B cell (primary cell): ENCODE measurements at regions of chr9 and their contacts with region 1.

Region 1: DNA sequence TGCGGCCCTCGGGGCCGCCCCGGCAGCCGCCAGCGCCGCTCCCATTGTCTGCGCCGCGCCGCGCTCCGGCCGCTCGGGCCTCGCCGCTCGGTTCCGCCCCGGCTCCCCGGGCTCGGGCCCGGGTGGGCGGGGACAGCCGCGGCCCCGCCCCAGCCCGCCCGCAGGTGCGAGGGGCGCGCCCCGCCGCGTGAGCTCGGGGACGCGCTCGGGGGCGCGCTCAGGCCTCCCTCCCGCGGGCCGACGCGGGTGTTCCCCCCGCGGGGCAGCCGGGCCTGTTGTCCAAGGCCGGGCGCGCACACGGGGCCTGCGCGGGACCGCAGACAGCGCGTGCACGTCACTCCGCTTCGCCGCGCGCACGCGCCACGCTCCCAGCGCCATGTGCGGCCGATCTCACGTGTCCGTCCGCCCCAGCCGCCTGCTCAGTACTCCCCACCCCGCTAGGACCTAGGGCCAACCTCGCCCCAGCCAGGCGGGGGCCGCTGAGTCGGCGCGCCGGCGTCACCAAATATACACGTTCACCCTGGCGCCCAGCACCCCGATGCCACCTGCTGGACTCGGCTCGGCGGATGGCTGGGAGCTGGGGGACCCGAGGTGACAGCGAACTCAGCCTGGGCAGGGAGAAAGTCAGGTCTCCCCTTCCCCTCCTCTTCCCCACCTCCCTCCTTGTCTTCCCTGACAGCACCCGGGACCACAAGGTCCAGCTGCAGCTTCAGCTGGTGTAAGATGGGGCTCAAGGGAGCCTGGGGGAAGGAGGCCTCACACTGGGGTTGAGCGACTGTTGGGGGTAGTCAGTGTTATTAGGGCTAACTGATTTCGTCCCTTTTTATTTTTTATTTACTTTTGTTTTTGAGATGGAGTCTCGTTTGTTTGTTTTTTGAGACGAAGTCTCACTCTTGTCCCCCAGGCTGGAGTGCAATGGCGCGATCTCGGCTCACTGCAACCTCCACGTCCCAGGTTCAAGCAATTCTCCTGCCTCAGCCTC is 14.3 kb downstream of the GBGT1 start:
- DNase-seq: peak; percentile 97
- ATAC-seq: peak; percentile 74
- H3K4me3 ChIP-seq: peak overlapping the region in 4 of 5 experiments; percentile 44 to 88 (median 69)
- H3K4me3 Mint-ChIP-seq: peak overlapping the region; percentile 85
- H3K27ac ChIP-seq: peak overlapping the region; percentile 70 to 93
- H3K27ac Mint-ChIP-seq: peak overlapping the region; percentile 94
- H3K4me1 ChIP-seq: peaks cover 25 to 34% of the 10 kb centered on the region in 2 donors
- H3K4me1 Mint-ChIP-seq: peaks cover 37% of the 10 kb centered on the region
- H3K27me3 ChIP-seq: no peaks in the 10 kb centered on the region
- H3K27me3 Mint-ChIP-seq: no peaks in the 10 kb centered on the region
- CTCF ChIP-seq: peak; percentile 62

Region 2: DNA sequence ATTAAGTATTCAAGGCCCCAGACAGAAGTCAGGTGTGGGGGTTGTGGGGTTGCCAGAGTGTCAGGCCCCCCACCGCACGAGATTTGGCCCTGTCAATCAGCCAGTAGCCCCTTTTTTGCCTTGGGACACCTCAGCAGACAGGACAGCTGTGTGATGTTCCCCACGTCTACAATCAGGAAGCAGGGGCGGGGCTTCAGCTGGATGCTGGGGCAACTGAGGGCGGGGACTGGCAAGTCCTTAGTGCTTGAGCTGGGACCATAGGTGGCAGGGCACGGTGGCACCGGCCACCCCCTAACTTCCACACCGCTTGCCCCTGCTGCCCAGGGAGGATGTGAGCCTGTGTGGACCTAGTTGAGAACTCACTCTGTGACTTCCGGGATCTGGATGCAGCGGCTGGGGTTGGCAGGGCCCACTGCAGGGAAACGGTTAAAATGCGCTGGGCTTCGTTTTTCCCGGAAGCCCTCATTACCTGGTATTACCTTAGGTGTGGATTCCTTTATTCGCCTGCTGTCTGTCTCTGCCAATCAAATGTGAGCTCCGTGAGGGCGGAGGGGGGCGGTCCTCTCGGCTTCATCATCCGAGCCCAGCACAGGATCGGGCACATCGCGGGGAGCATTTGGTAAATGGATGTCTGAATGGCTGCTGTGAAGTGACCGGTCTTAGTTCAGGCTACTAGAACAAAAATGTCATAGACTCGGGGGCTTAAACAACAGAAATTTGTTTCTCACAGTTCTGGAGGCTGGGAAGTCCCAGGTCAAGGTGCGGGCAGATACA is 126.1 kb before region 1 on chr9:
- CTCF ChIA-PET with region 1: interaction called, 25 read pairs
- POLR2A ChIA-PET with region 1: no interaction called
- intact Hi-C with region 1: loop called (anchors 2 kb)
- DNase-seq: no peak
- ATAC-seq: no peak
- H3K4me3 ChIP-seq: no peak overlapping the region
- H3K4me3 Mint-ChIP-seq: no peak overlapping the region
- H3K27ac ChIP-seq: no peak overlapping the region
- H3K27ac Mint-ChIP-seq: no peak overlapping the region
- H3K4me1 ChIP-seq: peaks cover 3 to 5% of the 10 kb centered on the region in 2 donors
- H3K4me1 Mint-ChIP-seq: peaks cover 7% of the 10 kb centered on the region
- H3K27me3 ChIP-seq: no peaks in the 10 kb centered on the region
- H3K27me3 Mint-ChIP-seq: peaks cover 2% of the 10 kb centered on the region
- CTCF ChIP-seq: no peak

Region 3: GRCh38 chr9:133103183-133103986 is 46.0 kb before region 1 on chr9:
- CTCF ChIA-PET with region 1: interaction called, 599 read pairs
- POLR2A ChIA-PET with region 1: interaction called, 5 read pairs
- intact Hi-C with region 1: loop called (anchors 1 kb)
- DNase-seq: peak; percentile 74
- ATAC-seq: peak; percentile 89
- H3K4me3 ChIP-seq: no peak overlapping the region
- H3K4me3 Mint-ChIP-seq: no peak overlapping the region
- H3K27ac ChIP-seq: no peak overlapping the region
- H3K27ac Mint-ChIP-seq: peak overlapping the region; percentile 21
- H3K4me1 ChIP-seq: no peaks in the 10 kb centered on the region
- H3K4me1 Mint-ChIP-seq: no peaks in the 10 kb centered on the region
- H3K27me3 ChIP-seq: no peaks in the 10 kb centered on the region
- H3K27me3 Mint-ChIP-seq: no peaks in the 10 kb centered on the region
- CTCF ChIP-seq: peak; percentile 97

Region 4: GRCh38 chr9:133121198-133121939 is 28.0 kb before region 1 on chr9 and contains the start of gene RALGDS:
- CTCF ChIA-PET with region 1: interaction called, 599 read pairs
- POLR2A ChIA-PET with region 1: interaction called, 9 read pairs
- intact Hi-C with region 1: loop called (anchors 1 kb)
- DNase-seq: peak; percentile 95
- ATAC-seq: peak; percentile 84
- H3K4me3 ChIP-seq: peak within 1 kb of the TSS; percentile 4 to 75 (median 56)
- H3K4me3 Mint-ChIP-seq: peak within 1 kb of the TSS; percentile 89
- H3K27ac ChIP-seq: peak within 1 kb of the TSS; percentile 97 to 99
- H3K27ac Mint-ChIP-seq: peak within 1 kb of the TSS; percentile 99
- H3K4me1 ChIP-seq: peaks cover 27 to 45% of the 10 kb centered on the region in 2 donors
- H3K4me1 Mint-ChIP-seq: peaks cover 62% of the 10 kb centered on the region
- H3K27me3 ChIP-seq: no peaks in the 10 kb centered on the region
- H3K27me3 Mint-ChIP-seq: no peaks in the 10 kb centered on the region
- CTCF ChIP-seq: no peak
- total RNA-seq, gene RALGDS: 55.7 and 62.4 TPM in 2 replicates

Region 5: DNA sequence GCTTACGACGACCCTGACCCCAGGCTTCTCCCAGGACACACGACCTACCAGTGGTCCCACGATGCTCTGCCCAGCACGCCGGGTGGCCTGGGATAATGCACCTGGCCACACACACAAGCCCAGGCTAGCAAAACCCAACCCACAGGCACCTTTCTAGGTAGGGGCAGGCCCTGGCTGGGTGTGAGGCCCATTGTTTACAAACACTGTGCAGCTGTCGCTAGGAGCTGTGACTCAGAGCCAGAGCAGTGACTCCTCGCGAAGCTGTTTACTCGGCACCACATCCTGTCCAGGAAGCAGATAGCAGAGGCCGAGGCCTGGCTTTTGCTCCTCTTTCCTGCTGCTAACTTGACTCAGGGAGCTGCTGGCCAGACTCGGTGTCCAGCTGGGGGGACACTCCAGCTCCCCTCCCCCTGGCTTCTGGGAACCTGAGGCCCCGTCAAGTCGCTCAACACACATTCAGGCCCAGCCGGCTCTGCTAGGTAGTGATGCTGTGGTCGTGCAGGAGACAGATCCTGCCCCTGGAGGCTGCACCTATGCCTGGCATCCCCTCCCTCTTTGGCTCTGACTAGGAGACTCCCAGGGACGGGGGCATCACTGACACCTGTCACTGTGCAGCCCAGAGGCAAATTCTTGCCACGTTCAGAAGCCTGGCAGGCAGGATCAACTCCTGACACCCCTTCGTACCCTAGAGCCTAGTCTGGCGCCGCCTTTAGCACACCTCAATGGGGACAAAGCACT is 15.6 kb before region 1 on chr9:
- CTCF ChIA-PET with region 1: interaction called, 87 read pairs
- POLR2A ChIA-PET with region 1: interaction called, 22 read pairs
- intact Hi-C with region 1: loop called (anchors 1 kb)
- DNase-seq: peak; percentile 87
- ATAC-seq: peak; percentile 82
- H3K4me3 ChIP-seq: no peak overlapping the region
- H3K4me3 Mint-ChIP-seq: peak overlapping the region; percentile 80
- H3K27ac ChIP-seq: peak overlapping the region; percentile 92 to 95
- H3K27ac Mint-ChIP-seq: peak overlapping the region; percentile 100
- H3K4me1 ChIP-seq: peaks cover 28 to 55% of the 10 kb centered on the region in 2 donors
- H3K4me1 Mint-ChIP-seq: peaks cover 55% of the 10 kb centered on the region
- H3K27me3 ChIP-seq: no peaks in the 10 kb centered on the region
- H3K27me3 Mint-ChIP-seq: no peaks in the 10 kb centered on the region
- CTCF ChIP-seq: no peak

Region 6: DNA sequence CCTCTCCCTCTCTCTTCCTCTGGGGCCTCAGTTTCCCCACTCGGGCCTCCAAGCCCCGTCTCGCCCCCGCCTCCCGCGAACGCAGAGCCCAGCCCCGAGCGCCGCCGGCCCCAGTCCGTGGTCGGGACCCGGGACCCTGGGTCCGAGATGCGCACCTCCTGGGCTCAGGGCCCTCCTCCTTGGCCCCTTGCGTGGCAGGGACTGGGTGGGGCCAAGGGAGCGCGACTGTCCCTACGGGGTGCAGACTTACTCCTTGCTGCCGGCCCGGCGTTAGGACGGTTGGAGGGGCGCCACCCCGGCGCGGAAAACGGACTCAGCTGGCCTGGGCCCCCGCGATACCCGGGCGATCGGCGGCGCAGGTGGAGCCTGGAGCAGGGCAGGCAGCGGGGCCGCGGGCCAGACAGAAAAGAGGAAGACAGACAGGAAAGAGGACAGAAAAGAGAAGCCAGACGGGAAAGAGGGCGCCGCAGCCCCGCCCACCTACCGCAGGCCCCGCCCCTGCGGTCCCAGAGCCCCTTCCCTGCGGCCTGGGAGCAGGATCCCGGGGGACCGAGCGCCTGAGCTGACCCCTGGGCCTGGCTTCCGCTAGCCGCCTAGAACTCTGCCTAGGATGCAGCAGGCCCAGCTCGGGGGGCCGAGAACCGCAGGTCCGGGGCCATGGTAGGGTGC is 14.2 kb after region 1 on chr9 and contains the start of gene GBGT1:
- CTCF ChIA-PET with region 1: interaction called, 8 read pairs
- POLR2A ChIA-PET with region 1: interaction called, 3 read pairs
- intact Hi-C with region 1: loop called (anchors 2 kb)
- DNase-seq: peak; percentile 81
- ATAC-seq: peak; percentile 84
- H3K4me3 ChIP-seq: peak within 1 kb of the TSS; percentile 11 to 86 (median 81)
- H3K4me3 Mint-ChIP-seq: peak within 1 kb of the TSS; percentile 91
- H3K27ac ChIP-seq: peak within 1 kb of the TSS; percentile 41 to 78
- H3K27ac Mint-ChIP-seq: peak within 1 kb of the TSS; percentile 82
- H3K4me1 ChIP-seq: peaks cover 19 to 31% of the 10 kb centered on the region in 2 donors
- H3K4me1 Mint-ChIP-seq: peaks cover 27% of the 10 kb centered on the region
- H3K27me3 ChIP-seq: peaks cover 0 to 8% (median 2%) of the 10 kb centered on the region in 4 experiments
- H3K27me3 Mint-ChIP-seq: peaks cover 6% of the 10 kb centered on the region
- CTCF ChIP-seq: no peak
- total RNA-seq, gene GBGT1: 52.7 and 57.9 TPM in 2 replicates

Region 7: DNA sequence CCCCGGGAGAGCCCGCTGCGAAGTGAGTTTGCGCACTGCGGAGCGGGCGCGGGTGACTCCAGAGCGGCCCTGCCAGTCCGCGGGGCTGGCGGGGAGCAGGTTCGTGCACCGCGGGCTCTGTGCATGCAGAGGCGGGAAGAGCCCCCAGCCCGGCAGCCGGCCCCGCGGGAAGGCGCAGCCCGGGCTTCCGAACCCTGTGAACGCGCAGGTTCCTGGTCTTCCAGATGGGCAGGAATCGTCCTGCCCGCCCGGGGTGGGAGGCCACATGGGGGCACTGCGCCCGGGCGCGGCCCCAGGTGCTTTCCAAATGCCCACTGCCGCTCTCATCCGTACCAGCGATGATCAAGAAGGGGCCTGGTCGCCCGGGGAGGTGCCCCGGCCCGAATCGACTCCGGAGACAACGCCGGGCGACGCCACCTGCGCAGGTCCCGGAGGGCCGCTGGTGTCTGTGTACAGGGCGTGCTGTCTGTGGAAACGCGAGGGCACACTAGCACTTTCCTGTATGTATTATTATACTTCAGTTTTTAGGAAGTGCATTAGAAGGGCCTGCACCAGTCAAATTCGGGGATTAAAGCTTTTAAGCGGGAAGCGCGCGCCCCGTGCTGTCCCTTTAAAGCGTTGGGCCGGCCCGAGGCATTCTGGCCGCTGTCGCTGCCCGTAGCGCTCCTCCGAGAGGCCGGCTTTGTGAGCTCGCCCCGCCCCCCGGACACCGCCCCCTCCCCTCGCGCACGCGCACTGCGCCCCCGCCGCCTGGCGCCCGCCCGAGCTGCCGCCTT is 986.1 kb after region 1 on chr9 and contains the start of gene WDR5:
- CTCF ChIA-PET with region 1: no interaction called
- POLR2A ChIA-PET with region 1: no interaction called
- intact Hi-C with region 1: no loop called
- DNase-seq: peak; percentile 93
- ATAC-seq: peak; percentile 86
- H3K4me3 ChIP-seq: peak within 1 kb of the TSS; percentile 46 to 98 (median 92)
- H3K4me3 Mint-ChIP-seq: peak within 1 kb of the TSS; percentile 91
- H3K27ac ChIP-seq: peak within 1 kb of the TSS; percentile 56 to 85
- H3K27ac Mint-ChIP-seq: peak within 1 kb of the TSS; percentile 93
- H3K4me1 ChIP-seq: peaks cover 22 to 30% of the 10 kb centered on the region in 2 donors
- H3K4me1 Mint-ChIP-seq: peaks cover 36% of the 10 kb centered on the region
- H3K27me3 ChIP-seq: no peaks in the 10 kb centered on the region
- H3K27me3 Mint-ChIP-seq: no peaks in the 10 kb centered on the region
- CTCF ChIP-seq: peak; percentile 37
- total RNA-seq, gene WDR5: 21.1 and 23.8 TPM in 2 replicates